Heart right ventricle (tissue), 16 donors: ENCODE measurements at regions of chr3 and their contacts with region 1.

Region 1: GRCh38 chr3:131794766-131795388 is 239.9 kb downstream of the CPNE4 start:
- DNase-seq: peak in 1 of 2 donors; percentile 27
- ATAC-seq: peak; percentile 58 to 85 (median 80)
- H3K4me3 ChIP-seq: no peak overlapping the region
- H3K27ac ChIP-seq: no peak overlapping the region
- H3K4me1 ChIP-seq: peaks cover 0 to 38% (median 19%) of the 10 kb centered on the region in 9 donors
- H3K27me3 ChIP-seq: no peaks in the 10 kb centered on the region
- CTCF ChIP-seq: peak; percentile 60 to 88 (median 84)

Region 2: GRCh38 chr3:131053043-131053859 is 741.6 kb before region 1 on chr3:
- intact Hi-C with region 1: loop called in 1 of 10 experiments (anchors 10 kb)
- DNase-seq: no peak
- ATAC-seq: no peak
- H3K4me3 ChIP-seq: no peak overlapping the region
- H3K27ac ChIP-seq: no peak overlapping the region
- H3K4me1 ChIP-seq: no peaks in the 10 kb centered on the region
- H3K27me3 ChIP-seq: no peaks in the 10 kb centered on the region
- CTCF ChIP-seq: peak; percentile 32 to 71 (median 55)

Region 3: GRCh38 chr3:132343018-132343612 is 548.2 kb after region 1 on chr3:
- intact Hi-C with region 1: loop called in 1 of 10 experiments (anchors 5 kb)
- DNase-seq: peak in 1 of 2 donors; percentile 52
- ATAC-seq: peak in 5 of 8 donors; percentile 56 to 69 (median 65)
- H3K4me3 ChIP-seq: peak overlapping the region in 1 of 10 donors; percentile 12
- H3K27ac ChIP-seq: no peak overlapping the region
- H3K4me1 ChIP-seq: peaks cover 0 to 25% (median 0%) of the 10 kb centered on the region in 9 donors
- H3K27me3 ChIP-seq: no peaks in the 10 kb centered on the region
- CTCF ChIP-seq: peak; percentile 50 to 82 (median 75)